PC-3 (cell line): ENCODE measurements at regions of chr5 and their contacts with region 1.

Region 1: DNA sequence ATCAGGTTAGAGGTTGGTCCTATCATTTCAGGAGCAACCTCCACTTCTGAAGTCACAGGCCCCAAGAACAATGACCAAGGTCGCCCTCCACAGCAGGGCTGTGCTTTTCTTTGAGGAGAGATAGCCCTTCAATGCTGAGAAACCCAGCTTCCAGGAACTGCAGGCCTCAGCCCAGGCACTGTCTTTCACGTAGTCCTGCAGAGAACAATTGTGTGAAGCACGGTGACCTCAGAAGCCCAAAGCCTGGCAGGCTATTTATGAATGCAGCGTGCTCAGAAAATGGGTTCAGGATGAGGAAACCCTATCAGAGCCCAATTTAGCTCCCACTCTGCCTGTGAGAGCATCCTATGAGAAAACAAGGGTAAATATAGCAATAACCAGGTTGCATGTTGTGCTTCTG is 388.3 kb downstream of the PLK2 start:
- DNase-seq: no peak
- ATAC-seq: no peak
- H3K4me3 ChIP-seq: no peak overlapping the region
- H3K27ac ChIP-seq: no peak overlapping the region
- H3K4me1 ChIP-seq: peaks cover 33% of the 10 kb centered on the region
- H3K27me3 ChIP-seq: no peaks in the 10 kb centered on the region
- CTCF ChIP-seq: no peak

Region 2: DNA sequence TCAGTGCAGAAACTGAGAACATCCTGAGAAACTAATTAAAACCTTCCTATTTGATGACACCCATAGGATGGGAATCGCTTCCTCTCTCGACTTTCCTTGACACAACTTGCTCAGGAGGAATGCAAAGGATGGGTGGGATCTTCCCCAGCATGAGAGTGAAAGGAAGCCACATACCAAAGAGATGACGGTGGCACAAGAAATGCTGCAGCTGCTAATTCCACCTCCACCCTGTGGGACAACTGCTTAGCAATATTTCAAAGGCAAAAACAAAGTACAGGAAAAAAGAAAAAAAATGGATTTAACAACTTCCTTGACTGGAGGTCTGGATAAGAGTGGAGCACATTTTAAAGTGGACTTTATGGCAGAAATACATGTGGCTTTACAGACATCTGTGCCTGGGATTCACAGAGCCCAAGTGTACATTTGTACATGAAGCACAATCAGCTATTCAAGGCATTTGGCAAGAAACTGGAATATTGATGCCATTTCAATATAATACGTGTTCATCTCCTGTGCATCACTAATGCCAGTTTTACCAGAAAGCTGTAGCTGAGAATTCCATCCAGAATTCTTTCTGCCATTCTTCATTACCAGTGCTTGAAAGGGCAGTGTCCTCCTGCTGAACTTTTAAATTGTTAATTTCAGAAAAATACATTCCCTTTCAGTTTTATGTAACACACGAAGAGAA is 229.7 kb before region 1 on chr5:
- CTCF ChIA-PET with region 1: no interaction called
- POLR2A ChIA-PET with region 1: no interaction called
- intact Hi-C with region 1: loop called (anchors 1 kb)
- DNase-seq: peak; percentile 87
- ATAC-seq: peak; percentile 64
- H3K4me3 ChIP-seq: peak overlapping the region; percentile 12; the same call in 1 of the 2 replicates
- H3K27ac ChIP-seq: peak overlapping the region; percentile 81
- H3K4me1 ChIP-seq: peaks cover 57% of the 10 kb centered on the region
- H3K27me3 ChIP-seq: no peaks in the 10 kb centered on the region
- CTCF ChIP-seq: no peak

Region 3: DNA sequence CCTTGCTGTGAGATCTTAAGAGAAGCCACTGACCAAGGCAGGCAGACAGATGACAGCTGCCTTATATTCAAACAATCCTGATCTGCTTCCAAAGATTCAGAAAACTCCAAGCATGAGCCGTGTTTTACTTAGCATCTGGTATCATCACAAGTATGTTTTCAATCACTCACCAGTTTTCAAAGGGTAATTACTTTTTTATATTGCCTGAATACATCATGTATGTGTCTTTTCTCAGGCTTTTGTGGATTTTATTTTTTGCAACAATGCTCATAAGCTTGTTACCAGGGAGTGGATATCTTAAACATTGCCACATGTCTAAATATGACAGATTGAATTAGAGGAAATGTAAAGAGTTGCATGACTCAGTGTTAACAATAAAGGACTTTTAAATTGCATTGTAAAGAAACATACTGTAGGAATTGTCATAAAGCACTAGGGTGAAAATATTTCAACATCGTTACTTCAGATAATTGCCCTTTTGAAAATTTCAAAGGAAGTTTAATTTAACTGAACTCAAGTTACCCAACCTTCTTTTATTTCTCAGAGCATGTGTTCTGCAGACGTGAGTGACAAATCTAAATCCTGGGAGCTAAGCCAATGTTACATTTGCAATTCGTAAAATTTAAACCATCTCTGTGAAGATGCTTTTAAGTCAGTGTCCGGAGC is 62.2 kb after region 1 on chr5:
- CTCF ChIA-PET with region 1: no interaction called
- POLR2A ChIA-PET with region 1: no interaction called
- intact Hi-C with region 1: loop called (anchors 2 kb)
- DNase-seq: peak; percentile 66
- ATAC-seq: peak; percentile 70
- H3K4me3 ChIP-seq: 0 out of 2 replicates have a peak overlapping the region, but pooled peaks have one; percentile 4
- H3K27ac ChIP-seq: peak overlapping the region; percentile 94
- H3K4me1 ChIP-seq: peaks cover 41% of the 10 kb centered on the region
- H3K27me3 ChIP-seq: no peaks in the 10 kb centered on the region
- CTCF ChIP-seq: no peak

Region 4: DNA sequence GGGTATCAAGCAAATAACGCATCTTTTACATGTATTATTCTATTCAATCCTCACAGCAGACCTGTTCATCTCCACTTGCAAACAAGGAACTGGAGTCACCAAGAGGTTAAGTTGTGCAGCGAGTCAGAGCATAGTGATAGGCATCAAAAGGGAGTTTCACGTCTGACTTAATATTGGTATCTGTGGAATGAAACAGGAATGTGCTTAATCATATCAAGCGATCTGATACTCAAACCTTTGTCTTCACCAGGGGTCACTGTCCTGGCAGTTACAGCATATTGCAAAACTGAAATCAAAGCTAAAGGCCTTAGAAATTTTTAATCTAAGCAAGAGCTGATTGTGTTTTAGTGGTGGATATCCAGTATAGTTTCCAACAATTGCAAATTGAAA is 116.7 kb after region 1 on chr5:
- CTCF ChIA-PET with region 1: no interaction called
- POLR2A ChIA-PET with region 1: interaction called, 4 read pairs
- intact Hi-C with region 1: loop called (anchors 5 kb)
- DNase-seq: peak; percentile 84
- ATAC-seq: peak; percentile 63
- H3K4me3 ChIP-seq: 0 out of 2 replicates have a peak overlapping the region, but pooled peaks have one; percentile 0
- H3K27ac ChIP-seq: peak overlapping the region; percentile 64
- H3K4me1 ChIP-seq: peaks cover 84% of the 10 kb centered on the region
- H3K27me3 ChIP-seq: no peaks in the 10 kb centered on the region
- CTCF ChIP-seq: peak; percentile 26; the same call in 1 of the 2 replicates

Region 5: DNA sequence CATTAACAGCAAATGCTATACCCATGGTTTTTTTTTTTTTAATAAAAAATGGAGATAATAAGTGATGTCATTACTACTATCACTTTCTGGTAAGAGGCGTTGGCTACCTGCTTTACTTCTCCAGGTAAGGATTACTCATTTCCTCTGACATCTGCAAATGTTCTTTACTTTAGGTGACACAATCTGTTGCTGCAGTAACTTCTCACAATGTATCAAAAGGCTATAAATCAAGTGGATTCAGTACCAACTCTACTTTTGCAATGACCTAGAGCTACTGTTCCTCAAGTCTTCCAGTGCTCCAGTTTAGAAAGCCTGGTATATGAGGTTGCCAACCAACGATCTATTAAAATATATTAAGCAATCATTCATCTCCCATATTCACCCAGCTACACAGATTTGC is 259.2 kb after region 1 on chr5:
- CTCF ChIA-PET with region 1: no interaction called
- POLR2A ChIA-PET with region 1: no interaction called
- intact Hi-C with region 1: loop called (anchors 5 kb)
- DNase-seq: peak; percentile 73
- ATAC-seq: peak; percentile 41
- H3K4me3 ChIP-seq: no peak overlapping the region
- H3K27ac ChIP-seq: peak overlapping the region; percentile 86
- H3K4me1 ChIP-seq: peaks cover 31% of the 10 kb centered on the region
- H3K27me3 ChIP-seq: no peaks in the 10 kb centered on the region
- CTCF ChIP-seq: no peak

Region 6: GRCh38 chr5:58818462-58818861 is 746.9 kb after region 1 on chr5:
- CTCF ChIA-PET with region 1: no interaction called
- POLR2A ChIA-PET with region 1: no interaction called
- intact Hi-C with region 1: no loop called
- DNase-seq: no peak
- ATAC-seq: no peak
- H3K4me3 ChIP-seq: no peak overlapping the region
- H3K27ac ChIP-seq: no peak overlapping the region
- H3K4me1 ChIP-seq: no peaks in the 10 kb centered on the region
- H3K27me3 ChIP-seq: peaks cover 26% of the 10 kb centered on the region
- CTCF ChIP-seq: no peak